Caco-2 (cell line): ENCODE measurements at regions of chr16 and their contacts with region 1.

Region 1: GRCh38 chr16:50152807-50153452 is at the start of gene TENT4B:
- DNase-seq: peak; percentile 90 to 92
- H3K4me3 ChIP-seq: peak within 1 kb of the TSS; percentile 97
- H3K4me3 Mint-ChIP-seq: peak within 1 kb of the TSS; percentile 78
- H3K27ac Mint-ChIP-seq: peak within 1 kb of the TSS; percentile 87
- H3K4me1 ChIP-seq: peaks cover 16% of the 10 kb centered on the region
- H3K4me1 Mint-ChIP-seq: peaks cover 15% of the 10 kb centered on the region
- H3K27me3 ChIP-seq: no peaks in the 10 kb centered on the region
- H3K27me3 Mint-ChIP-seq: no peaks in the 10 kb centered on the region
- CTCF ChIP-seq: no peak
- total RNA-seq, gene TENT4B: 28.6 and 29.3 TPM in 2 replicates

Region 2: DNA sequence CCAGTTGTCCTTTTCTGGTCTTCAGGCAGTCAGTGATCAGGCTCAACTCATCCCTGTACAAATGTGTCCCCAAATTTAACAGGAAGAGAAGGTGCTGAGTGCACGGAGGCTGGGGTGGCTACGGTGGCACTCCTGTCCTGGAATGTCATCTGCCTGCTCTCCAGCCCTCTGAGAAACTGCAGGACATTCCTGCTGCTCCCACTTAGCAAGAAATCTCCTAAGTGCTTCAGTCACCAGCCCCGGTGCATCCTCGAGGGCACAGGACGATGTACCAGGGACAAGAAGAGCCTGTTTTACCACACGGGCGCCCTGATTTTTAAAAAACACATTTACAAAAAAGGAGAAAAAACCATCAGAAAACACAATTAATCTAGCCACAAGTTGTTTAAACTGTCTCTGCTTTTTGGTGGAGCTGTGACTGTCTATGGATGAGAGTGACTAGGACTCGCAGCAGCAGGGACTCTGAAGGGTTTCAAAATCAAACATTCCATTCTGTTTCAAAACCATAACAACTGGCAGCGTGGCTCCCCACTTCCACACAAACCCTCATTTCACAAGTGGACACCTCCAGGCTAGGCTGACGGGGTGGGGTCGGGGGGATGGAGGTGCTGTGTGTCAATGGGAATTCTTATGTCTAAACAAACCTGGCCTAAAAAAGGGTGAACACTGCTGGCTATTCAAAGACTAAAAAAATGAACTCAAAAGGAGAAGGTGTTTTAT is 193.2 kb before region 1 on chr16:
- CTCF ChIA-PET with region 1: no interaction called
- POLR2A ChIA-PET with region 1: no interaction called
- intact Hi-C with region 1: loop called (anchors 5 kb)
- DNase-seq: no peak
- H3K4me3 ChIP-seq: no peak overlapping the region
- H3K4me3 Mint-ChIP-seq: no peak overlapping the region
- H3K27ac Mint-ChIP-seq: no peak overlapping the region
- H3K4me1 ChIP-seq: no peaks in the 10 kb centered on the region
- H3K4me1 Mint-ChIP-seq: peaks cover 1% of the 10 kb centered on the region
- H3K27me3 ChIP-seq: no peaks in the 10 kb centered on the region
- H3K27me3 Mint-ChIP-seq: peaks cover 3% of the 10 kb centered on the region
- CTCF ChIP-seq: no peak

Region 3: DNA sequence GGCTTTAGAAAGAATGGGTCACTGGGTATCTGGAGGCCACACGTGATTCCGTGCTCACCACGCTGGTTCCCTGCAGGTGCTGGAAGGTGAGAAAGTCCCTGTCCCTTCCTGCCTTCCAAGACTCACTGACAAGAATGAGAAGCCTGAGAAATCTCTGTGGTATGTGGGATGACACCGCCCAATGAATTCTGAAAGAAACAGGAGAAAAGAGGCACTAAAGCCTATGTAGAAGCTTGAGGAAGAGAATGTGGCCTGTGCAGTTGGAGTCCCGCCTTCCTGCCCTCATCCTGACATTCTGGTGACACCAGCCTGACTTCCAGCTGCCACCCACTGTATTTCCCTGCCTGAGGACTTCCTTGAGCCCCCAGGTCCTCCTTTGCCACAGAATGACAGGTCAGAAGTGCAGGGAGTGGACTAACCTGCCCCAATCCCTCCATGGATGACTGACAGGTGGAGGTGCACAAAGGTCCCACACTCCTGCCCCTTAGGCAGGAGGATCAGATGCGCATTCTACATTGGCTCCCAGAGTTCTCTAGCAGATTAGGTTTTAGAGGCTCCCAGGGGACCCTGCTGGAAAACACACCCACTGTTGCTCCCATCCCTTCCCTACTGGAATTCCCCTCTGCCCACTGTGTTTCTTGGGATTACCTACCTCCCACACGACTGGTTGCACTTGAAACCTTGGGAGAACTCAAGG is 38.4 kb before region 1 on chr16:
- CTCF ChIA-PET with region 1: no interaction called
- POLR2A ChIA-PET with region 1: no interaction called
- intact Hi-C with region 1: loop called (anchors 1 kb)
- DNase-seq: peak; percentile 53 to 69
- H3K4me3 ChIP-seq: no peak overlapping the region
- H3K4me3 Mint-ChIP-seq: no peak overlapping the region
- H3K27ac Mint-ChIP-seq: peak overlapping the region; percentile 15
- H3K4me1 ChIP-seq: peaks cover 12% of the 10 kb centered on the region
- H3K4me1 Mint-ChIP-seq: no peaks in the 10 kb centered on the region
- H3K27me3 ChIP-seq: no peaks in the 10 kb centered on the region
- H3K27me3 Mint-ChIP-seq: no peaks in the 10 kb centered on the region
- CTCF ChIP-seq: no peak

Region 4: DNA sequence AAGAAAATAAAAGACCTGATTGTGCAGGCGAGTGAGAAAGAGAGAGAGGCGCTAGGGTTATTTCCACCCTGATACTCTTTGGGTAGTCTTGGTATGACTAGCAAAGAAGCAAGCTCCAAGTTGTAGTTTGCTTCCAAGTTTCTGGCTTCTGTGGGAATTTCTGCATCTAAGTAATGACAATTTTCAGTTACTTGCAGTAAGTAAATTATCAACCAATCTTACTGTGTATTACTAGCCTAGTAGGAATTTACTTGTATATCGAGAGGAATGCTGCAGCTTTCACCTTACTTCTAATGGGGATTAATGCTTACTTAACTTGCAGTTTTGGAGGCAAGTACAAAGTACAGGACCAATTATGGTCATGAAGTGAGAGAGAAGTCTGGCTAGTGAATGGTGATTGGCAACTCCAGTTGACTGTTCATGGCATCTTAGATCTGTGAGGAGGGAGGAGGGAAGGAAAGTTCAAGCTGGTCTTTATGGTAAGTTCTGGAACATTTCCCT is 32.1 kb after region 1 on chr16:
- CTCF ChIA-PET with region 1: no interaction called
- POLR2A ChIA-PET with region 1: no interaction called
- intact Hi-C with region 1: loop called (anchors 1 kb)
- DNase-seq: peak in 1 of 2 experiments; percentile 60
- H3K4me3 ChIP-seq: no peak overlapping the region; the same call in 1 of the 2 replicates
- H3K4me3 Mint-ChIP-seq: peak overlapping the region; percentile 17
- H3K27ac Mint-ChIP-seq: peak overlapping the region; percentile 8
- H3K4me1 ChIP-seq: peaks cover 19% of the 10 kb centered on the region
- H3K4me1 Mint-ChIP-seq: peaks cover 38% of the 10 kb centered on the region
- H3K27me3 ChIP-seq: no peaks in the 10 kb centered on the region
- H3K27me3 Mint-ChIP-seq: no peaks in the 10 kb centered on the region
- CTCF ChIP-seq: no peak

Region 5: GRCh38 chr16:50202926-50203624 is 50.1 kb after region 1 on chr16:
- CTCF ChIA-PET with region 1: no interaction called
- POLR2A ChIA-PET with region 1: no interaction called
- intact Hi-C with region 1: loop called (anchors 1 kb)
- DNase-seq: peak; percentile 52 to 77
- H3K4me3 ChIP-seq: no peak overlapping the region
- H3K4me3 Mint-ChIP-seq: peak overlapping the region; percentile 23
- H3K27ac Mint-ChIP-seq: peak overlapping the region; percentile 94
- H3K4me1 ChIP-seq: peaks cover 42% of the 10 kb centered on the region
- H3K4me1 Mint-ChIP-seq: peaks cover 34% of the 10 kb centered on the region
- H3K27me3 ChIP-seq: no peaks in the 10 kb centered on the region
- H3K27me3 Mint-ChIP-seq: no peaks in the 10 kb centered on the region
- CTCF ChIP-seq: no peak